T-cell (primary cell): ENCODE measurements at regions of chr11 and their contacts with region 1.

Region 1: GRCh38 chr11:118448294-118448693 is 12.0 kb downstream of the KMT2A start:
- DNase-seq: no peak
- ATAC-seq: no peak
- H3K4me3 ChIP-seq: no peak overlapping the region
- H3K4me3 Mint-ChIP-seq: no peak overlapping the region
- H3K27ac ChIP-seq: no peak overlapping the region
- H3K27ac Mint-ChIP-seq: peak overlapping the region in 1 of 2 donors; percentile 22
- H3K4me1 ChIP-seq: peaks cover 10 to 11% of the 10 kb centered on the region in 2 experiments
- H3K4me1 Mint-ChIP-seq: peaks cover 74 to 80% (median 77%) of the 10 kb centered on the region in 3 donors
- H3K27me3 ChIP-seq: no peaks in the 10 kb centered on the region
- H3K27me3 Mint-ChIP-seq: no peaks in the 10 kb centered on the region

Region 2: DNA sequence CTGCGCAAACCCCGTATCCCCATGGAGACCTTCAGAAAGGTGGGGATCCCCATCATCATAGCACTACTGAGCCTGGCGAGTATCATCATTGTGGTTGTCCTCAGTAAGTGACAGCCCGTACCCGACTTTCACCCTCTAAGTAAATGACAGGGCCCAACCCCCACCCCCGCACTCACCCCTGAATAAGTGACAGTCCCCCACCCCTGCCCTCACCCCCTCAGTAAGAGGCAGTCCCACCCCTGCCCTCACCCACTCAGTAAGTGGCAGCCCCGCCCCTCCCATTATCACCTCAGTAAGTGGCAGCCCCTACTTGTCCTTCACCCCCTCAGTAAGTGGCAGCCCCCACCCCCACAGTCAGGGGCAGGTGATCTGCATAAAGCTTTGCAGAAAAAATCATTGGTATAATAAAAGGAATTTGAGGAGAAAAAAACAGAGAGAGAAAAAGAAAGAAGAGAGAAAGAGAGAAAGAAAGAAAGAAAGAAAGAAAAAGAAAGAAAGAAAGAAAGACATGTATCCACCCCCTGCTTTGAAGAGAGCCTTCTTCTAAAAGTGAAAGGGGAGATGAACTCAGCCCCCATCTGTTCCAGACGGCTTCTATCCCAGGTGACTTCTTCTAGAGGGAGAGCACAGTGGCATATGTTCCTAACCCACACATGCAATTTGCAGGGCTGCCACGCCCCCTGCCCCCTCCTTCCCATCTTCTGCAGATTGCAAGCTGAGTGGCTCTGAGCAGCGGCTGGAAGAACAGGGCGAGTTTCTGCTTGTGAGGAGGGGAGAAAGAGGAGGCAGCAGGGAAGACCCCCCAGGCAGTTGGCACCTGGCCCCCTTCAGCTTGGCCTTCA is 349.1 kb before region 1 on chr11:
- CTCF ChIA-PET with region 1: no interaction called
- POLR2A ChIA-PET with region 1: no interaction called
- DNase-seq: no peak
- ATAC-seq: no peak
- H3K4me3 ChIP-seq: no peak overlapping the region
- H3K4me3 Mint-ChIP-seq: no peak overlapping the region
- H3K27ac ChIP-seq: no peak overlapping the region
- H3K27ac Mint-ChIP-seq: no peak overlapping the region
- H3K4me1 ChIP-seq: no peaks in the 10 kb centered on the region
- H3K4me1 Mint-ChIP-seq: no peaks in the 10 kb centered on the region
- H3K27me3 ChIP-seq: peaks cover 0 to 20% of the 10 kb centered on the region in 2 experiments
- H3K27me3 Mint-ChIP-seq: peaks cover 0 to 8% of the 10 kb centered on the region in 2 donors

Region 3: DNA sequence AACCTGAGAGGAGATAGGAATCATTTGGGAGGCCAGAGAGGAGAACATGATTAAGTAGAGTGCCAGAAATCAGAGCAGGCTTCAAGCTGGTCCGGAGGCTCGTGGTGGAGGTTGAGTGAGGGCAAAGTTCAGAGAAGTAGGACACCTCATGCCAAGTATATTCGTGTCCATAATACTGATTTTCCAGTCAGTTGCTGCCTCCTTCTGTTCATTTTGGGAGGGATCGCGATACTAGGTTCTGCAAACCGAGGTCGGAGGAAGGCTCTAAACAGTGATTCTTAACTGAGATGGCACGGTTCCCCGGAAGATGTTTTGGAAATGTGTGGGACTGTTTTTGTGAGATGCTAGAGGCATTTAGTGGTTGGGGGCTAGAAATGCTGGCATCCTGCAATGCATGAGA is 157.4 kb before region 1 on chr11:
- CTCF ChIA-PET with region 1: no interaction called
- POLR2A ChIA-PET with region 1: no interaction called
- DNase-seq: peak in 18 of 35 experiments; percentile 8 to 74 (median 26)
- ATAC-seq: peak; percentile 60 to 83 (median 70)
- H3K4me3 ChIP-seq: no peak overlapping the region
- H3K4me3 Mint-ChIP-seq: no peak overlapping the region
- H3K27ac ChIP-seq: no peak overlapping the region
- H3K27ac Mint-ChIP-seq: no peak overlapping the region
- H3K4me1 ChIP-seq: peaks cover 0 to 5% of the 10 kb centered on the region in 2 experiments
- H3K4me1 Mint-ChIP-seq: peaks cover 12 to 22% (median 14%) of the 10 kb centered on the region in 3 donors
- H3K27me3 ChIP-seq: no peaks in the 10 kb centered on the region
- H3K27me3 Mint-ChIP-seq: no peaks in the 10 kb centered on the region

Region 4: GRCh38 chr11:118417801-118418200 is 30.5 kb before region 1 on chr11:
- CTCF ChIA-PET with region 1: no interaction called
- POLR2A ChIA-PET with region 1: no interaction called
- DNase-seq: no peak
- ATAC-seq: no peak
- H3K4me3 ChIP-seq: no peak overlapping the region
- H3K4me3 Mint-ChIP-seq: no peak overlapping the region
- H3K27ac ChIP-seq: no peak overlapping the region
- H3K27ac Mint-ChIP-seq: no peak overlapping the region
- H3K4me1 ChIP-seq: no peaks in the 10 kb centered on the region
- H3K4me1 Mint-ChIP-seq: no peaks in the 10 kb centered on the region
- H3K27me3 ChIP-seq: no peaks in the 10 kb centered on the region
- H3K27me3 Mint-ChIP-seq: no peaks in the 10 kb centered on the region

Region 5: GRCh38 chr11:118497831-118498230 is 49.5 kb after region 1 on chr11:
- CTCF ChIA-PET with region 1: interaction called in 1 of 2 experiments, 5 read pairs
- POLR2A ChIA-PET with region 1: interaction called in 1 of 2 experiments, 10 read pairs
- DNase-seq: no peak
- ATAC-seq: no peak
- H3K4me3 ChIP-seq: no peak overlapping the region
- H3K4me3 Mint-ChIP-seq: no peak overlapping the region
- H3K27ac ChIP-seq: no peak overlapping the region
- H3K27ac Mint-ChIP-seq: no peak overlapping the region
- H3K4me1 ChIP-seq: no peaks in the 10 kb centered on the region
- H3K4me1 Mint-ChIP-seq: no peaks in the 10 kb centered on the region
- H3K27me3 ChIP-seq: no peaks in the 10 kb centered on the region
- H3K27me3 Mint-ChIP-seq: no peaks in the 10 kb centered on the region

Region 6: DNA sequence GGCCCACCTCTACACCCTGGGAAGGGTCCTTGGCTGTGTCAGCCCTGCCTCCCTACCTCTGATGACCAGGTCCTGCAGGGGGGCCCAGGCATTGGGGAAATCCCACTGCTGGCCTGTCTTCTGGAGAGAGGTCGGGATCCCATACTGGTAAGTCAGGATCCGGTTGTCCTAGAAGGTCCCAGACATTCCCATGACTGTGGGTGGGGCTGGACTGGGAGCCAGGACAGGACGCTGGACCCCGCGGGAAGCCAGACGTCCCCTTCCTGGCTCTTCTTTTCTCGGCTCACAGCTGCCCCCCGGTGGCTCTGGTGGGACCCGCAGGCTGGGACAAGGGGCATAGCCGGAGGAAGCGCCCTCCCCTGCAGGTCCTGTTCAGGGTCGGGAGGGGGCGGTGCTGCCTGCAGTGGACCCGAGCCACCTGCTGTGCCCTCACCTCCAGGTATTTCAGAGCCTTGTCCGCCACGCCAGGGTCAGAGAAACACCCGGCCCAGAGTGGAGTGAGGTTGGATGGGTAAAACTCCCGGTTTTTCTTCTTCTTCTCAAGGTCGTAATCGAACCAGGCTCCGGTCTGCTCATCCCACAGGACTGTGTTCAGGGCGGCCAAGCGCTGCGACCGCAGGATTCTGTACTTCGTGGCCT is 211.1 kb after region 1 on chr11:
- CTCF ChIA-PET with region 1: no interaction called
- POLR2A ChIA-PET with region 1: no interaction called
- DNase-seq: peak; percentile 74 to 93 (median 86)
- ATAC-seq: peak; percentile 97 to 100 (median 99)
- H3K4me3 ChIP-seq: no peak overlapping the region
- H3K4me3 Mint-ChIP-seq: peak overlapping the region in 1 of 3 donors; percentile 36
- H3K27ac ChIP-seq: no peak overlapping the region
- H3K27ac Mint-ChIP-seq: no peak overlapping the region
- H3K4me1 ChIP-seq: peaks cover 0 to 11% of the 10 kb centered on the region in 2 experiments
- H3K4me1 Mint-ChIP-seq: peaks cover 3 to 12% (median 6%) of the 10 kb centered on the region in 3 donors
- H3K27me3 ChIP-seq: peaks cover 0 to 25% of the 10 kb centered on the region in 2 experiments
- H3K27me3 Mint-ChIP-seq: no peaks in the 10 kb centered on the region